ENCODE measurements at regions of chr12 and their contacts with region 1.

Region 1: GRCh38 chr12:47032644-47033043 is 46.8 kb upstream of the PCED1B start:
- DNase-seq: no peak
- H3K4me3 ChIP-seq: no peak overlapping the region
- H3K27ac ChIP-seq: peak overlapping the region in 3 of 4 donors; percentile 39 to 65 (median 64)
- H3K4me1 ChIP-seq: peaks cover 0 to 25% (median 23%) of the 10 kb centered on the region in 4 donors
- H3K27me3 ChIP-seq: no peaks in the 10 kb centered on the region
- CTCF ChIP-seq: peak; percentile 46 to 55 (median 51)
- EP300 ChIP-seq: no peak
- POLR2A ChIP-seq: no peak

Region 2: GRCh38 chr12:47066278-47067025 is 33.8 kb after region 1 on chr12:
- intact Hi-C with region 1: loop called (anchors 5 kb)
- DNase-seq: no peak
- H3K4me3 ChIP-seq: no peak overlapping the region
- H3K27ac ChIP-seq: peak overlapping the region in 3 of 4 donors; percentile 30 to 73 (median 61)
- H3K4me1 ChIP-seq: peaks cover 0 to 47% (median 40%) of the 10 kb centered on the region in 4 donors
- H3K27me3 ChIP-seq: no peaks in the 10 kb centered on the region
- CTCF ChIP-seq: no peak
- EP300 ChIP-seq: no peak
- POLR2A ChIP-seq: no peak

Region 3: DNA sequence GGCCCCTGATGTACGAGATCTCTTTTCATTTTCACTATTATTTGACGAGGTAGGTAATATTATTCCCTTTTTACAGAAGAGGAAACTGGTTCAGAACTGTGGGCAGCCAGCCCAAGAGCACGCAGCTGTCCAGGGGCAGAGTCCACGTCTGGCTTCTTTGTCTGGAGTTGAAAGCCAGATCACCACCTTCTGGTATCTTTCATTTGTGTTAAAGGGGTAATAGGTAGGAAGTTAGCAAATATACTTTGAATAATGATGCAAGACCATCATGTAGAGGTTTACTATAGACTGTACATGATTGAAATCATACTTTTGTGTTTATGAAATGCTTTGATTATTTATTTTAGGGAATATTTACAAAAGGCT is 191.2 kb after region 1 on chr12:
- intact Hi-C with region 1: loop called (anchors 10 kb)
- DNase-seq: no peak
- H3K4me3 ChIP-seq: peak overlapping the region in 1 of 4 donors; percentile 2
- H3K27ac ChIP-seq: peak overlapping the region; percentile 5 to 74 (median 64)
- H3K4me1 ChIP-seq: peaks cover 0 to 30% (median 23%) of the 10 kb centered on the region in 4 donors
- H3K27me3 ChIP-seq: no peaks in the 10 kb centered on the region
- CTCF ChIP-seq: no peak
- EP300 ChIP-seq: no peak
- POLR2A ChIP-seq: no peak

Region 4: DNA sequence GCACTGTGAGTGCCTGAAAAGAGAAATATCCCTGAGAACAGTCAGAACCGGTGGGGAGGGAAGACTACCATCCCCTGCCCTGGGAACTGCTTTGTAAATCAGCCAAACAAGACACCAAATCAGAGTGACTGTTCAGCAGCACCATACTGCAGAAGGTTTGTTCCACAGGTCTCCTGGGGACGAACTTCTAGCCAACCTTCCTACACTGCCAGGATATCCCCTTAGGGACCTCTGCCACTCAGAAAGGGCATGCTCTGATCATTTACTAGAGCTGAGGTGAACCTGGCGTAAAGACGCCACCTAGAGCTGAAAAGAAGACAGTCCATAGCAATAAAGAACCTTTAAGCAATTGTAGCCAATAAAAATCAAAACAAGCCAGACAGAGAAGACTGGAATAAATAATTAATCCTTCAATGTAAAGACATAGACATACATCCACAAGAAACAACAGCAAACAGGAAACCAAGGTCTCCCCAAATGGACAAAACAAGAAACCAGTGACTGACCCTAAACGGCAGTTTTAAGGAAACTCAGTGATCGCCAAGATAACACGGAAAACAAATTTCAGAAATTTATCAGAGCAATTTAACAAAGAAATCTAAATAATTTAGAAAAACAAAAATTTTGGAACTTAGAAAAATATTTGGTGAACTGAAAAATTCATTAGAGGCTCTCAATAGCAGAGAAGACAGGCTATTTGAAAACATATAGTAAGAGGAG is 275.2 kb after region 1 on chr12:
- intact Hi-C with region 1: loop called (anchors 5 kb)
- DNase-seq: no peak
- H3K4me3 ChIP-seq: no peak overlapping the region
- H3K27ac ChIP-seq: no peak overlapping the region
- H3K4me1 ChIP-seq: peaks cover 0 to 8% (median 3%) of the 10 kb centered on the region in 4 donors
- H3K27me3 ChIP-seq: no peaks in the 10 kb centered on the region
- CTCF ChIP-seq: peak in 3 of 4 experiments; percentile 25 to 45 (median 29)
- EP300 ChIP-seq: no peak
- POLR2A ChIP-seq: no peak

Region 5: GRCh38 chr12:47397664-47398281 is 365.1 kb after region 1 on chr12:
- intact Hi-C with region 1: loop called (anchors 2 kb)
- DNase-seq: no peak
- H3K4me3 ChIP-seq: no peak overlapping the region
- H3K27ac ChIP-seq: no peak overlapping the region
- H3K4me1 ChIP-seq: peaks cover 0 to 23% (median 18%) of the 10 kb centered on the region in 4 donors
- H3K27me3 ChIP-seq: no peaks in the 10 kb centered on the region
- CTCF ChIP-seq: peak in 3 of 4 experiments; percentile 20 to 36 (median 24)
- EP300 ChIP-seq: no peak
- POLR2A ChIP-seq: no peak

Region 6: DNA sequence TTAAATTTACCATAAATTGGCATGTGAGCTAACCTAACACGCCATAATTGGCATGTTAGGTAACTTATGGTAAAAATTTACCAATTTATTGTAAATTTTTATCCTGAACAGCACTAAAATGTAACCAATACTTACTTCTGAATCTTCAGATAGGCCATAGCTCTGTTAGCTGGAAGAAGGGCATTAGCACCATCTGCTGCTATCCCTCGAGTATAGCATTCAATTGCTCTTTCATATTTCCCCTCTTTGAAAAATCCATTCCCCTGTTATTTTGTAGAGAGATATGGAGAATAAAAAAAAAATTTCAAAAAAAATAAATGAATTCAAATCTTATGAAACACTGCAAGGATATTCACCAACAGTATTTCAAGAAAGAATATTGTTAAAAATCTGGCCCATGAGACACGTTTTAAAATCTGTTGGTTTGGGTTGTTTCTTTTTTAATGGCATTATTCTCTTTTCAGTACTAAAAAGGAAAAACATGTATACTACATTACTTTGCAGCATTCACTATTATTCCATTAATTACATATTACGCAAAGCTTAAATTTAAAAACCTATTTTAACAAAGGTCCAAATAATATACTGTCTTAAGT is 654.1 kb after region 1 on chr12:
- intact Hi-C with region 1: loop called (anchors 2 kb)
- DNase-seq: no peak
- H3K4me3 ChIP-seq: no peak overlapping the region
- H3K27ac ChIP-seq: no peak overlapping the region
- H3K4me1 ChIP-seq: no peaks in the 10 kb centered on the region
- H3K27me3 ChIP-seq: no peaks in the 10 kb centered on the region
- CTCF ChIP-seq: peak; percentile 60 to 69 (median 66)
- EP300 ChIP-seq: no peak
- POLR2A ChIP-seq: no peak

Measured in sigmoid colon (tissue), 7 donors.